ENCODE measurements at regions of chr10 and their contacts with region 1.

Region 1: DNA sequence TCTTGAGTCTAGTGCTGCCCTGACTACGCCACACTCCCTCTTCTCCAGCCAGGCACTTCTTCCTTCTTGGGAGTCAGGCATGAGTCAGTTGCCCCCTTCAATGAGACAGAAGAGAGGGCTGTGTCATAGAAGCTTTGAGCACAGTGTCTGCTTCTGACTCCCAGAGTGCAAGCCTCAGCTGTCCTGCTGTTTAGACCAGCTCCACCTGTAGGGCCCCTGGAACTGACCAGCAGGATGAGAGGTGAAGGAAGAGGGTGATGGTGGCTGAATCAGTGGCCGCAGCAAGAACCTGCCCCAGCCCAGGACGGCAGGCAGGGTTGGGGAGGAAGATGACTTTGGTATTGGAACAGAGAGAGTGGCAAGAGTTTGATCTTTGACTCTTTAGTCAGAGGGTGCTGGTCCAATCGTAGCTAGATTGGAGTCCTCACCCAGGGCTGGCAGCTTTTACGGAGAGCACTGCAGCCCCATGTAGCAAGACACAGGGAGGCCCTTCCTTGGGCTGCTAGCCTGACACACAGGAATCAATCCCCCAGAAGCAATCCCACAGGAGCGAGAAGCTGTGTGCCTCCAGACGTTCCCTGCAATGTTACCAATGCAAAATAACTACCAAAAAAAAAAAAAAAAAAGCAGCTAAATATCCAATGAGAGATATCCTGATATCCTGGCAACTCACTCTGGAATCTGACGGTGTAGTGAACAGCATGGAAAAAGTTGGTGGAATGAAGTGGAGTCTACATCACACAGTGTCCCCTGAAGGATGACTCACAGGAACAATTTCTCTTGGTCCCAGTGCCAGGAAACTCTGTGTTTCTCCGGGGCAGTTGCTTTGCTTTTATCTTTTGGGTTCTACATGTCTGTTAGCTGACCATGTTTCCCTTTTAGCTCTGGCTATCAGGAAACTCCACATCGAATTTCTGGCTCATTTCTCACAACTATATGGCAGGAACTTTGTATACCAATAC is 6.9 kb downstream of the C10orf62 start:
- DNase-seq: peak; percentile 80
- H3K4me3 Mint-ChIP-seq: peak overlapping the region; percentile 13
- H3K27ac Mint-ChIP-seq: peak overlapping the region; percentile 70
- H3K4me1 Mint-ChIP-seq: peaks cover 29% of the 10 kb centered on the region
- H3K27me3 Mint-ChIP-seq: no peaks in the 10 kb centered on the region
- CTCF ChIP-seq: no peak

Region 2: DNA sequence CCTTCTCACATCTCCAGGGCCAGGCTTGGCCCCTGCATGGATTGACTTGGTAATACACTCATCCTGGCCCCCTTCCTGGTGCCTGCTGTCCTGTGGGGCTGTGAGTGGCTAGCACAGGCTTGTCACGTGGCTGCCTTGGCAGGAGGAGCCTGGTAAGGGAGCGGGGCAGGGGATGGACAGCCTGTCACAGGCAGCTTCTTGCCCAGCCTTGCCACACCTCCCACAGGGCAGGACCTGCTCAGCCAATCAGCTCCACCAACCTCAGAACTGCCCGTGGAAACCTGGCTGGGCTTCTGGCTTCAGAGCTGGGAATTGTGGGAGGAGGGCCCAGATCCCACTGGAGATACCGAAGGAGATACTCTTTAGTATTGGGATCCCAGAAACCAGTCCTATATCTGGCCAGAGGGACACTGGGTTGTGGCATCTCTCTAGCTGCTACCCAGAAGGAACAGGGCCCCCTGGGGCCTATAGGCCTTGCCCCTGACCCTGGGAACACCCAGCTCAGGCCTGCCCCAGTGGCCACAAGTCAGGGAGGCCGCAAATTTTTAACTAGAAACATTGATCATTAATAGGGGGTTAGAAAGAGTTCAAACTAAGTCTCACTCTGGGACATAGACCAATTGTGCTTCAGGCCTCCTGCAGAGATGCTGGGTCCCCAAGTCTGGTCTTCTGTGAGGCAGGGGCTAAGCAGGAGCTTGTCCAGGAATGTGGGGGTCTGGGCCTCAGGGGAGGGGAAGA is 12.2 kb before region 1 on chr10 and contains the start of gene HOGA1:
- CTCF ChIA-PET with region 1: interaction called, 8 read pairs
- POLR2A ChIA-PET with region 1: interaction called, 16 read pairs
- intact Hi-C with region 1: no loop called
- DNase-seq: peak; percentile 85
- H3K4me3 Mint-ChIP-seq: peak within 1 kb of the TSS; percentile 35
- H3K27ac Mint-ChIP-seq: peak within 1 kb of the TSS; percentile 78
- H3K4me1 Mint-ChIP-seq: peaks cover 22% of the 10 kb centered on the region
- H3K27me3 Mint-ChIP-seq: no peaks in the 10 kb centered on the region
- CTCF ChIP-seq: no peak
- total RNA-seq, gene HOGA1: 0.88 and 1.7 TPM in 2 replicates

Region 3: GRCh38 chr10:97623277-97623676 is 26.9 kb after region 1 on chr10:
- CTCF ChIA-PET with region 1: no interaction called
- POLR2A ChIA-PET with region 1: no interaction called
- intact Hi-C with region 1: no loop called
- DNase-seq: no peak
- H3K4me3 Mint-ChIP-seq: no peak overlapping the region
- H3K27ac Mint-ChIP-seq: no peak overlapping the region
- H3K4me1 Mint-ChIP-seq: no peaks in the 10 kb centered on the region
- H3K27me3 Mint-ChIP-seq: no peaks in the 10 kb centered on the region
- CTCF ChIP-seq: no peak

Measured in MCF 10A (cell line).